ENCODE measurements at regions of chr16 and their contacts with region 1.

Region 1: DNA sequence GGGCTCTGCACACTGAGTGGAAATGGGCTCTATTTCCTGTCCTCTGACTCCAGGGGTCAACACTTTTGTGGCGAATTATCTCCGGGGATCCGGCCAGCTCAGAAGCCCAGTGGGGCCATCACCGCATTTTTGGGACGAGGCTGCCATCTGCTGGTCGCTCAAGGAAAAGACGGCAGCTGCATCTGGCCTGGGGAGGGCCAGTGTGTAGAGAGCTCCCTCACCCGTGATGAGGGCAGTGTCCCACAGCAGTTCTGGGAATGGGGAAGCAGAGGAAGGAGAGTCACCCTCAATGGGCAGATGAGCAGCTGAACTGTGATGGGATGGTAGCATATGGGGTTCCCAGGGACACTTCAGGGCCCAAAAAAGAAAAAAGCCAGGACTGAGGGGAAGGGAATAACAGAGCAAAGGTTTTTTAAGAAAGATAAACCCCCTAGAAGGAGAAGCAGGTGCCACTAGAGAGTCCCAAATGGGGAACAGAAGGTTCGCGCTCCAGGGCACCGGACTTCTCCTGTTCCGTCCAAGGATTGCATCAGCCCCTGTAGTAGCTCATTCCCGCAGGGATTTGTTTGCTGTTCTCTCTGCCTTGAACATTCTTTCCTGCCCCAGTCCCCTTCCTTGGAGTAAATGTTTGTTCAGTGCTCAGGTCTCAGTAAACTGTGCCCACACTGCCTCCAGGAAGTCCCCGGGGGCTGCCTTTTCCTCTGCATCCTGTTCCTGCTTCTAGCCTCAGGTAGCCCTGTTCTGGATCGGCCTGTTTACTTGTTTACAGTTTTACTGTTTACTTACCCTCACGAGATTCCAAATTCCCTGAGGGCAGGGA is 9.3 kb upstream of the ABCC12 start:
- DNase-seq: peak; percentile 78 to 86
- H3K4me3 ChIP-seq: peak overlapping the region; percentile 5; the same call in 1 of the 2 replicates
- H3K4me3 Mint-ChIP-seq: peak overlapping the region; percentile 68
- H3K27ac Mint-ChIP-seq: peak overlapping the region; percentile 81
- H3K4me1 ChIP-seq: peaks cover 12% of the 10 kb centered on the region
- H3K4me1 Mint-ChIP-seq: peaks cover 16% of the 10 kb centered on the region
- H3K27me3 ChIP-seq: no peaks in the 10 kb centered on the region
- H3K27me3 Mint-ChIP-seq: no peaks in the 10 kb centered on the region
- CTCF ChIP-seq: peak; percentile 82 to 91

Region 2: DNA sequence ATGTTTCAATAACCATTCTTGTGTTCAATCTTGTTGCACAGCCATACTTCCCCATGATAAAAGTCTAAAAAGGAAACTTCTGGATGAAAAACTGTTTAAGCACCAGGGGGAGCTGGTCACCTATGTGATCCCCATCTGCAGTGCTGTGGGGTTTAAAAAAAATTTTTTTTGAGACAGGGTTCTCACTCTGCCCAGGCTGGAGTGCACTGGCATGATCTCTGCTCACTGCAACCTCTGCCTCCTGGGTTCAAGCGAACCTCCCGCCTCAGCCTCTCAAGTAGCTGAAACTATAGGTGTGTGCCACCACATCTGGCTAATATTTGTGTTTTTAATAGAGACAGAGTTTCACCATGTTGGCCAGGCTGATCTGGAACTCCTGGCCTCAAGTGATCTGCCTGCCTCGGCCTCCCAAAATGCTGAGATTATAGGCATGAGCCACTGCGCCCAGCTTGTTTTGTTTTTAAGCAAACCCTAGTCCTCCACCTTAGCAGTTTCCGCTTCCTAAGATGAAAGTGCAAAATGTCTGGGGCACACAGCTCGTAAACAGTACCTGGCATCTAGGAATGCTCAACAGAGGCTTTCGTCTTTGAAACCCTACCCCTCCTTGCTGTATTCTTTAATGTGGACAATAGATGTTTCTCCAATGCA is 1217.1 kb before region 1 on chr16:
- CTCF ChIA-PET with region 1: no interaction called
- POLR2A ChIA-PET with region 1: no interaction called
- intact Hi-C with region 1: loop called (anchors 1 kb)
- DNase-seq: peak in 1 of 2 experiments; percentile 61
- H3K4me3 ChIP-seq: no peak overlapping the region
- H3K4me3 Mint-ChIP-seq: no peak overlapping the region
- H3K27ac Mint-ChIP-seq: no peak overlapping the region
- H3K4me1 ChIP-seq: peaks cover 14% of the 10 kb centered on the region
- H3K4me1 Mint-ChIP-seq: no peaks in the 10 kb centered on the region
- H3K27me3 ChIP-seq: no peaks in the 10 kb centered on the region
- H3K27me3 Mint-ChIP-seq: no peaks in the 10 kb centered on the region
- CTCF ChIP-seq: peak; percentile 59 to 67

Region 3: DNA sequence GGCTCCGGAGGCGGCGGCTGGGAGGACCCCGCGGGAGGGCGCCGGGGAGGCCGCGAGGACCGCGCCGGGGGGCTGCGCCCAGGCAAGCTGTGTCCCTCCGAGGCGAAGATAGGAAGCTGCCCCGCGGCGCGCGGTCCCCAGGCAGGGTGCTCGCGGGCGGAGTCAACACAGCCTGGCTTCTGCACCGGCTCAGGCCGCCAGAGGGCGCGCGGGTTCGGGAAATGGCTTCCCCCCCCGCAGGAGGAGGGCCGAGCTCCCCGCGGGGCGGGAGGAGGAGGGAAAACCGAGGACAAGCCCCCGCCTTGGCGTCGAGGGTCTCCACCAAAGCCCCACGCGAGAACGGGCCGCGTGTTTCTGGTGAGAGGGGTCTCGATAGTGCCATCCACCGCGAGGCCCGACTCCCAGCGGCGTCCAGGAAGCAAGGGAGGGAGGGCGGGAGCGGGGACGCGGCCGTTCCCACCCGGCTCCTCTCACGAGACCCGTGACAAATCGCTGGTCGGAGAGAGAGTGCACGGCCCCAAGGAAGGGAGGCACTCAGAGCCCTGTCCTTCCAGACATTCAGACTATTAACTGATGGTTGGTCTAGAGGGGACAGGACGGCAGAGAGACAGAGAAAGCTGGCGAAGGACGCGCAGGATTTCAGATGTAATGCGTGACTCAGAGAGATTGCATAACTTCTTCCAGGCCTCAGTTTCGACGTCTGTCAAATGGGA is 1127.2 kb before region 1 on chr16:
- CTCF ChIA-PET with region 1: interaction called, 9 read pairs
- POLR2A ChIA-PET with region 1: interaction called, 3 read pairs
- intact Hi-C with region 1: loop called (anchors 2 kb)
- DNase-seq: peak; percentile 84 to 93
- H3K4me3 ChIP-seq: peak overlapping the region; percentile 69
- H3K4me3 Mint-ChIP-seq: peak overlapping the region; percentile 75
- H3K27ac Mint-ChIP-seq: no peak overlapping the region
- H3K4me1 ChIP-seq: no peaks in the 10 kb centered on the region
- H3K4me1 Mint-ChIP-seq: no peaks in the 10 kb centered on the region
- H3K27me3 ChIP-seq: no peaks in the 10 kb centered on the region
- H3K27me3 Mint-ChIP-seq: peaks cover 2% of the 10 kb centered on the region
- CTCF ChIP-seq: peak; percentile 87 to 92

Region 4: DNA sequence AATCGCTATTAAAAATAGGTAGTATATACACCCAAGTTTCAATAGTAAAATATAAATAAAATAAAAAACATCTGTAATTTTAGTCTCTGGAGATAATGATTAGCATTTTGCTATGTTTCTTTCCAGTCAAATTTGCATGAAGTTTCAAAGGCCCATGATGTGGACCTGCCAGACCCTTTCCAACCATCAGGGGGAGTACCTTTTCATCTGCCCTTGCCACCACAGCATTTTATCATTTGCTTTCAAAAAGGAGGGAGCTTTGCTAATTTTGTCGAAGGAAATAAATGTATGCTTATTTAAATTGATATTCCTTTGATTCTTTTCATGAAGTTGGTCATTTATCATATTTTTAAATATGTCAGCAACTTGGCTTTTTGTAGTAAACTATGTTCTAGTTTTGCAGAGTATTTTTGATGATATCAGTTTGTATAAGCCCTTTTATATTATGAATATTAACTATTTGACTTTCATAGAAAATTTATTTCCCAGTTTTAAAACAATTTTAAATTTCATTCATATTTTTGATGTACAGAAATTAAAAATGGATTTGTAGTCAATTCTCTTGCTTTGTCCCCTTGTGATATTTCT is 906.1 kb before region 1 on chr16:
- CTCF ChIA-PET with region 1: interaction called, 5 read pairs
- POLR2A ChIA-PET with region 1: no interaction called
- intact Hi-C with region 1: loop called (anchors 2 kb)
- DNase-seq: peak in 1 of 2 experiments; percentile 36
- H3K4me3 ChIP-seq: no peak overlapping the region
- H3K4me3 Mint-ChIP-seq: no peak overlapping the region
- H3K27ac Mint-ChIP-seq: no peak overlapping the region
- H3K4me1 ChIP-seq: no peaks in the 10 kb centered on the region
- H3K4me1 Mint-ChIP-seq: no peaks in the 10 kb centered on the region
- H3K27me3 ChIP-seq: no peaks in the 10 kb centered on the region
- H3K27me3 Mint-ChIP-seq: no peaks in the 10 kb centered on the region
- CTCF ChIP-seq: peak; percentile 61 to 71

Region 5: DNA sequence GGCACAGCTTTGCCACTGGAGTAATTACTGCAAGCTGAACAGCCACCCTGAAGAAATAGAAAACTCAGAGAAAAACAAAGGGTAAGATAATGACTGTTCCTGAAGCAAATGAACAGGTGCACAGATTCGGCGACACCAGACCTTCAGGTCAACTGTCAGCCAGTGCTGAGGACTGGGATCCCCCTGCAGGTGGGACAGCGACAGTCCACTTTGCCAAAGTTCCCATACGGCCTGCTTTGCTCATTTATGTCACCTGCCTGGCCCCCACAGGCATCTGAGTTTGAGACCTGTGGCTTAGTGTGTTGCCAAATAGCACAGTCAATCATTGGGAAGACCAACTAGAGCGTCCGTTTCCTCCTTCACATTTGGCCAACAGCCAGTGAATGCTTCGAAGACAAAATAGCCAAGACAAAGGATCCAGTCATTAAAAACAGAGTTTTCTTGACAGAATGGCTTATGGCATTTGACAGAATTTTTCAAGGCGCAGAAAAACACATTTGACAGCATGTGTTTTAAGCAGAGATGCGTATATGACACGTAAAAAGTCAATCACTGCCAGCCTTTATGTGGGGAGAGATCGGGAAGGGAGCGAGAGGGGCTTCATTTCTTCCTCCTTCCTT is 123.1 kb before region 1 on chr16:
- CTCF ChIA-PET with region 1: no interaction called
- POLR2A ChIA-PET with region 1: no interaction called
- intact Hi-C with region 1: loop called (anchors 5 kb)
- DNase-seq: peak; percentile 44 to 51
- H3K4me3 ChIP-seq: no peak overlapping the region
- H3K4me3 Mint-ChIP-seq: no peak overlapping the region
- H3K27ac Mint-ChIP-seq: no peak overlapping the region
- H3K4me1 ChIP-seq: no peaks in the 10 kb centered on the region
- H3K4me1 Mint-ChIP-seq: no peaks in the 10 kb centered on the region
- H3K27me3 ChIP-seq: no peaks in the 10 kb centered on the region
- H3K27me3 Mint-ChIP-seq: peaks cover 10% of the 10 kb centered on the region
- CTCF ChIP-seq: peak; percentile 53 to 62

Measured in Caco-2 (cell line).